H1 (cell line): ENCODE measurements at regions of chr1 and their contacts with region 1.

Region 1: DNA sequence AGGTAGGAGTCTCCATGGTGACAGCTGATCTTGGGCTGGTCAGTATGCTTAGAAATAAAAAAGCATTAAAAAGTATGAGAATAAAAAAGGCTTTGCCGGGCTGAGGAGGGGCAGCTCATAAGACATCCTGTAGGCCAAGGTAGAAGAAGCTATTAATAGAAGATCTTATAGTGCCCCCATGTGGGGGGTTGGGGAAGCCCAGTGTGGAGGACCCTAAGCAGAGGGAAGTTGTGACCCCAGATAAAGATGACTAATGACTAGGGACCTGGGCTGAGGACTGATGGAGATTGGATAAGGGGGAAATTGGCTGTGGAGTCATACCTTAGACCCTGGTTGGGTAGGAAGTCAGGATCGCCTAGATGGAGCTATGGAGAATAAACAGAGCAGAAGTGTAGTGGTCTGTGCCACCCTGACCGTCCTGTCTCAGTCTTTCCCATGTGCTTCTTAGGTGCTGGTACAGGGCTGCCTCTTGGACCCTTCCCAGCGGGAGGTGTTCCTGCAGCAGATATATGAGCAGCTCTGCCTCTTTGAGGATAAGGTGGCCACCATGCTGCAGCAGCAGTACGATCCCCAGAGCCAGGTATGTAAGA is 25.0 kb downstream of the SZT2 start:
- DNase-seq: peak; percentile 33 to 85
- H3K4me3 ChIP-seq: no peak overlapping the region
- H3K27ac ChIP-seq: no peak overlapping the region
- H3K4me1 ChIP-seq: no peaks in the 10 kb centered on the region
- H3K27me3 ChIP-seq: no peaks in the 10 kb centered on the region
- CTCF ChIP-seq: peak; percentile 45 to 75 (median 68)
- EP300 ChIP-seq: no peak
- POLR2A ChIP-seq: no peak
- RAD21 ChIP-seq: peak; percentile 86 to 94

Region 2: DNA sequence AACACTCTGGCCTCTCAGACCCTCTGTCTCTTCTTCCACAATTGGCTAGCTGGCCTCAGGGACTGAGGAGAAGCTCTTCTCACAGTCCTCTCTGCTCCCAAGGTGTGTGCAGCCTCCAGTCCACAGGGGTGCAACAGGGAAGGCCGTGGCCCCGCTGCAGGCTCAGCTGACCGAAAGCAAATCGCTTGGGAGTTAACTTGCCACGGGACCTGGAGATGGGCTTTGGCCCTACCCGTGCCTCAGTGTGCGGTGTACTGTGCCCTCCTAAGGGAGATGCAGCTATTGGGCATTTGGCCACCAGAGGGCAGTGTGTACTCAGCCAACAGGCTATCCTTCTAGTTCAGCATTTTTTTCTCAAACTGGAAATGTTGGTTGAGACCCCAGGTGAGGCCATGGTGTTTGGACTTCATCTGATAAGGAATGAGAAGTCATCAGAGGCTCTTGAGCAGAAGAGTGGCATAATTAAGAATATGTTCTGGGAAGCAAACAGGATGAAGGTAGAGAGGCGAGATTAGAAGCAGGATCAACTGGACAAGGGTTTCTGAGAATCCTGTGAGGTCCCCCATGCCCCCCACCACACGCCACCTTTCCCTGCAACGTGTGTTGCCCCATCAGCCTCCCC is 187.5 kb before region 1 on chr1:
- CTCF ChIA-PET with region 1: interaction called, 131 read pairs
- POLR2A ChIA-PET with region 1: no interaction called
- DNase-seq: peak; percentile 80 to 98
- H3K4me3 ChIP-seq: no peak overlapping the region
- H3K27ac ChIP-seq: no peak overlapping the region
- H3K4me1 ChIP-seq: peaks cover 0 to 5% (median 3%) of the 10 kb centered on the region in 4 experiments; a peak in 3 of 7 replicates
- H3K27me3 ChIP-seq: no peaks in the 10 kb centered on the region
- CTCF ChIP-seq: peak; percentile 89 to 99 (median 93)
- EP300 ChIP-seq: no peak
- POLR2A ChIP-seq: no peak
- RAD21 ChIP-seq: peak; percentile 99 to 100

Region 3: DNA sequence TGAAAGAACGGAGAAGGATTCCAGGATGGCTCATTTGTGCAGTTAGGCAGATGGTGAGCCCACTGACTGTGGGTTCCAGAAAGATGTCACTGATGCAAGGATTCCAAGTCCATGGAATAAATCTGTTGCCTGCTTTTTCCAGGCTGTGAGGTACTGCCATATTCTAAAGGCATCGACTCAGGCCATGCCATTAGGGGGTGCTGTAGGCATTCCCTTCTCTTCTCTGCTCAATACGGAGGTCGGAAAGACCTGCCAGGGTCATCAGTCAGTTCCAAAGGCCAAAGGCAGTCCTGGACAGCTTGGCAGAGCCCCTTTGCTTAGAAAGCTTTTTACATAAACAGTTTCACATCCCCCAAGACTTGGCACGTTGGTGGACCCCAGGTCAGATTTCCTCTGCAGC is 176.6 kb before region 1 on chr1:
- CTCF ChIA-PET with region 1: interaction called, 59 read pairs
- POLR2A ChIA-PET with region 1: interaction called, 4 read pairs
- DNase-seq: peak; percentile 36 to 79
- H3K4me3 ChIP-seq: no peak overlapping the region
- H3K27ac ChIP-seq: no peak overlapping the region
- H3K4me1 ChIP-seq: no peaks in the 10 kb centered on the region
- H3K27me3 ChIP-seq: no peaks in the 10 kb centered on the region
- CTCF ChIP-seq: peak; percentile 57 to 97 (median 90)
- EP300 ChIP-seq: no peak
- POLR2A ChIP-seq: no peak
- RAD21 ChIP-seq: peak; percentile 98

Region 4: DNA sequence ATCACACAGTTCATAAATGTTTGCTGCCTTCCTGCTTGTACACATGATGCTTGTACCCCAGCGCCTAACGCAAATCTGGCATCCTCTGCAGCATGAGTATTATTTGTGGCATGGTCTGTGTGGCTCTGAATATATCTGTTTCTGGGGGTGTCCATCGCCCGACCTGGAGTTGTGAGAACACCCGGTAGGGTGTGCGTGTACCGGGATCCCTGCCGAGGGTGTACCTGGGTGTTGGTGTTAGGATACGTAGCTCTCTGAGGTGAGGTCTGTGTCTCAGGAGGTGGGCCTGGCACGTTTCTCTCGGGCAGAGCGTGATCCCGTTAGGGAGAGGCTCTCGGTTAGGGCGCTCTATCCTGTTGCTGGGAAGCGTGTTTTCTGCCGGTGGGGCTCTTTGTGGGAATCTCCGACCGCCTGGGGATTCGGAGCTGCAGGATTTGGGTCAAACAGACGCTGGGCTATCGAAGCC is 66.4 kb before region 1 on chr1:
- CTCF ChIA-PET with region 1: no interaction called
- POLR2A ChIA-PET with region 1: no interaction called
- DNase-seq: no peak
- H3K4me3 ChIP-seq: peak overlapping the region; percentile 57 to 72 (median 69)
- H3K27ac ChIP-seq: peak overlapping the region; percentile 69; the same call in 1 of the 2 replicates
- H3K4me1 ChIP-seq: peaks cover 4 to 15% (median 9%) of the 10 kb centered on the region in 4 experiments; a peak in 6 of 7 replicates
- H3K27me3 ChIP-seq: peaks cover 0 to 5% (median 0%) of the 10 kb centered on the region in 4 experiments; a peak in 2 of 7 replicates
- CTCF ChIP-seq: no peak
- EP300 ChIP-seq: no peak
- POLR2A ChIP-seq: no peak
- RAD21 ChIP-seq: no peak

Region 5: GRCh38 chr1:43367904-43368645 is 46.7 kb before region 1 on chr1 and contains the start of gene ELOVL1:
- CTCF ChIA-PET with region 1: interaction called, 12 read pairs
- POLR2A ChIA-PET with region 1: no interaction called
- DNase-seq: peak in 1 of 2 experiments; percentile 92
- H3K4me3 ChIP-seq: peak within 1 kb of the TSS; percentile 33 to 68 (median 58)
- H3K27ac ChIP-seq: peak within 1 kb of the TSS; percentile 79; the same call in 1 of the 2 replicates
- H3K4me1 ChIP-seq: peaks cover 4 to 21% (median 13%) of the 10 kb centered on the region in 4 experiments
- H3K27me3 ChIP-seq: no peaks in the 10 kb centered on the region
- CTCF ChIP-seq: peak in 2 of 3 experiments; percentile 4 to 9; a peak in 2 of 4 replicates
- EP300 ChIP-seq: no peak
- POLR2A ChIP-seq: peak; percentile 14 to 72
- RAD21 ChIP-seq: peak; percentile 1 to 19; a peak in 1 of 4 replicates
- total RNA-seq, gene ELOVL1: 28.5 and 29.1 TPM in 2 replicates

Region 6: DNA sequence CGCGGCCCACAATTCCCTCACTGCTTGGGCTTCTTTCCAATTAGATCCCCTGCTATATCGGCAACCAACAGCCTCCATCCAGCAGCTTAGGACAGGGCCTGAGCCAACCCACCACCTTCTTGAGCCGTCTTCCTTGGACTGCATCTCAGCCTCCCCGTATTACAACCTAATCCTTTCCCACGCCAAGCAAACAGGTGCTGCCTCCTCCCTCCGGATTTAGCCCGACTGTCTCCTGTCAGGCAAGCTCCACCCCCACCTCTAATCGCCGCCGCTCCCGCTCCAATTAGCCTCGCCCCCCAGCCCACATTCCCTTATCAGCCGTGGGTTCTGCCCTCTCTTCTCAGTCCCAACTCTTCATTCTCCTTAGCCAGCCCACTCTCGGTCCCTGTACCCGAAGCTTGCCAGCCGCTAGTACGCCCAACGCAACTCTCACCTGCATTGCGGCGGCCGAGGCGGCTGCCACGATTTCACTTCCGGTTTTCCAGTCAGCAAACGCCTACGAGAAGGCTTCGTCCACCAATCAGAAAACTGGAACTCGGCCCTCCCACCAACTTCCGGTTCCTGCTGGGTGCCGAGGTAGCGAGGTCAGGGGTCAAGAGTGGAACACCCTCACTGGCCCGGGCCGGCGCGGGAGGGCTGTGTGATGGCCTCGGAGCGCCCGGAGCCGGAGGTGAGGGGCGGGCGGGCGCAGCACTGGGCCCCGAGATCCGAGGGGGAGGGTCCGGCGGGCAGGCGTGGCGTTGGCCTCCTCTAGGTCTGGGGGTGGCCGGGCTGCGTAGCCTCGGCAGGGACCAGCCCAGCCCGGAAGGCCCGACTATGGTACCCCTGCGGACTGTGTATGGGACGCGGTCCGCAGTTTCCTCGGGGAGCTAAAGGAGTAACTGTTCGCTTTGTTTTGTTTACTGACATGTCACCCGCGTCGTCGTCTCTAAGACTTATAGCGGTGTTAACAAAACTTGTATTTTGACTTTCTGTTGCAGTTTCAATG is 25.1 kb before region 1 on chr1 and contains the starts of genes MED8 and SZT2:
- CTCF ChIA-PET with region 1: interaction called, 12 read pairs
- POLR2A ChIA-PET with region 1: interaction called, 5 read pairs
- DNase-seq: peak; percentile 93 to 96
- H3K4me3 ChIP-seq: peak within 1 kb of the TSS; percentile 78 to 92 (median 85)
- H3K27ac ChIP-seq: peak within 1 kb of the TSS; percentile 5; the same call in 1 of the 2 replicates
- H3K4me1 ChIP-seq: peaks cover 0 to 8% (median 4%) of the 10 kb centered on the region in 4 experiments; a peak in 4 of 7 replicates
- H3K27me3 ChIP-seq: no peaks in the 10 kb centered on the region
- CTCF ChIP-seq: no peak
- EP300 ChIP-seq: no peak
- POLR2A ChIP-seq: peak in 1 of 2 experiments; percentile 49; a peak in 1 of 3 replicates
- RAD21 ChIP-seq: no peak; a peak in 1 of 4 replicates
- total RNA-seq, gene MED8: 19.5 and 20.6 TPM in 2 replicates
- total RNA-seq, gene SZT2: 12.9 and 13.8 TPM in 2 replicates

Region 7: GRCh38 chr1:43402089-43402865 is 12.5 kb before region 1 on chr1:
- CTCF ChIA-PET with region 1: interaction called, 21 read pairs
- POLR2A ChIA-PET with region 1: interaction called, 6 read pairs
- DNase-seq: no peak
- H3K4me3 ChIP-seq: no peak overlapping the region
- H3K27ac ChIP-seq: no peak overlapping the region
- H3K4me1 ChIP-seq: no peaks in the 10 kb centered on the region
- H3K27me3 ChIP-seq: no peaks in the 10 kb centered on the region
- CTCF ChIP-seq: no peak
- EP300 ChIP-seq: no peak
- POLR2A ChIP-seq: no peak
- RAD21 ChIP-seq: no peak

Region 8: GRCh38 chr1:43444836-43445235 is 30.1 kb after region 1 on chr1:
- CTCF ChIA-PET with region 1: interaction called, 19 read pairs
- POLR2A ChIA-PET with region 1: no interaction called
- DNase-seq: no peak
- H3K4me3 ChIP-seq: no peak overlapping the region
- H3K27ac ChIP-seq: no peak overlapping the region
- H3K4me1 ChIP-seq: no peaks in the 10 kb centered on the region
- H3K27me3 ChIP-seq: no peaks in the 10 kb centered on the region
- CTCF ChIP-seq: no peak
- EP300 ChIP-seq: no peak
- POLR2A ChIP-seq: no peak
- RAD21 ChIP-seq: no peak

Region 9: DNA sequence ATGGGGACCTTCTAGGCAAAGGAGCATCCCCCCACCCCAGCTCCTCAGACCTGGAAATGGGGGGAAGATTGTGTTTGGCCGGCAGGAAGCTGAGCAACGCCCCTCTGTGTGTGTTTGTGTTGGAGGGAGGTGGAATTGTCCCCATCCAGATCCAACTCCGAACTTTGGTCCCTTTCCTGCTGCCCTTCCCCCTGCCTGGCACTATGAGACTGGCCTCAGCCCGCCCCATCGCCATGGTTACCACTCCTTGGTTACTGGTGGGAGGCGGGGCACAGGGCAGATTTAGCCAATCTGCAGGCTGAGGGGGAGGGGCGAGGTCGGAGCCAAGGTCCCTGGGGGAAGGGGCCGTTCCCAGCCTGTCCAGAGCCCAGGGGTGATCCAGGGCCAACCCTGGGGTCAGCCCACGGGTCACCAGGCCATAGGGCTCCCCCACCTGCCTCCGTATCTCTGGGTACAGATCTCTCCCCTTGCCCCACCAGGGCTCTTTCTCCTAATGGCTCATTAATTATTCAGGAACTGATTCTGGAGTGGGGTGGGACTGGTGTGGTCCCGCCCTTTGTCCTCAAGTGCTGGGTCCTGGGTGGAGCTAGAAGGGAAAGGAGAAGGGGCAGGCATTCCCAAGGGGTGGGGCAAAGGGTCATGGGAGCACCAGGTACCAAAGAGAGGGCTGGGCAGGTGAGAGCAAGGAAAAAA is 131.1 kb after region 1 on chr1:
- CTCF ChIA-PET with region 1: no interaction called
- POLR2A ChIA-PET with region 1: no interaction called
- DNase-seq: peak in 1 of 2 experiments; percentile 97
- H3K4me3 ChIP-seq: peak overlapping the region in 3 of 4 experiments; percentile 16 to 53 (median 30); a peak in 5 of 8 replicates
- H3K27ac ChIP-seq: peak overlapping the region; percentile 80
- H3K4me1 ChIP-seq: peaks cover 8 to 54% (median 43%) of the 10 kb centered on the region in 4 experiments
- H3K27me3 ChIP-seq: no peaks in the 10 kb centered on the region
- CTCF ChIP-seq: no peak
- EP300 ChIP-seq: peak; percentile 67 to 76; a peak in 2 of 3 replicates
- POLR2A ChIP-seq: no peak
- RAD21 ChIP-seq: no peak